ENCODE measurements at regions of chr9 and their contacts with region 1.

Region 1: DNA sequence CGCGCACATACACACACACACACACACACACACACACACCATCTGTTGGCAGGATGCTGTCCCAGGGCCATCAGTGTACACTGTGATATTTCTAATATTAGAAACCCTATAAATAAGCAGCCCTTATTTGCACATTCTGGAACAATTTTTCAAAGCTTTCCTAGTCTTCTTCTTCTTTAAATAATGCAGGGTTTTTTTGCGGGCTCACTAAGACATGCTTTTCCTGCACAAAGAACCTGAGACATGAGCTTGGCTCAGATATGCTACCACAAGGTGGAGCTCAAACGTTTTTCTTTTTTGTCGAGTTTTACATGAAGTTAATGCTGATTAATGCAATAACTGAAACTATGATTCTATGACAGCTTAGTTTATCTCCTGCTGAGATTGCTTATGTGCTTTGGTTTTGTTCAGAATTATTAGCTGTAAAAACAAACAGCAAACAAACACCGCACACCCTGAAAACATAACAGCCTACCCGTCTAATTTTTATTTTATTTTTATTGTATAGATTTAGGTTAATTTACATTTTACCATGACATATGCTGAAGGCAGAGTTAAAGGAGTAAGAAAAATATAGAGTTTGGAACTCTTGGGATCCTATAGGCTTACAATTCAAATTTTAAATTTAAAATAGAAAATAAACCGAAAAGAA is 95.8 kb downstream of the ALDH1A1 start:
- DNase-seq: no peak
- H3K4me3 ChIP-seq: no peak overlapping the region
- H3K27ac ChIP-seq: peak overlapping the region in 2 of 4 donors; percentile 3 to 37
- H3K4me1 ChIP-seq: peaks cover 12 to 22% (median 14%) of the 10 kb centered on the region in 4 donors
- H3K27me3 ChIP-seq: no peaks in the 10 kb centered on the region
- CTCF ChIP-seq: peak; percentile 57 to 67 (median 60)
- EP300 ChIP-seq: no peak
- POLR2A ChIP-seq: no peak

Region 2: GRCh38 chr9:72322259-72322658 is 534.8 kb before region 1 on chr9:
- in situ Hi-C with region 1: no loop called
- intact Hi-C with region 1: no loop called
- DNase-seq: no peak
- H3K4me3 ChIP-seq: no peak overlapping the region
- H3K27ac ChIP-seq: no peak overlapping the region
- H3K4me1 ChIP-seq: peaks cover 0 to 3% (median 0%) of the 10 kb centered on the region in 4 donors
- H3K27me3 ChIP-seq: no peaks in the 10 kb centered on the region
- CTCF ChIP-seq: no peak
- EP300 ChIP-seq: no peak
- POLR2A ChIP-seq: no peak

Region 3: GRCh38 chr9:72817413-72817812 is 39.7 kb before region 1 on chr9:
- in situ Hi-C with region 1: no loop called
- intact Hi-C with region 1: no loop called
- DNase-seq: no peak
- H3K4me3 ChIP-seq: no peak overlapping the region
- H3K27ac ChIP-seq: no peak overlapping the region
- H3K4me1 ChIP-seq: peaks cover 0 to 17% (median 2%) of the 10 kb centered on the region in 4 donors
- H3K27me3 ChIP-seq: no peaks in the 10 kb centered on the region
- CTCF ChIP-seq: no peak
- EP300 ChIP-seq: no peak
- POLR2A ChIP-seq: no peak

Region 4: DNA sequence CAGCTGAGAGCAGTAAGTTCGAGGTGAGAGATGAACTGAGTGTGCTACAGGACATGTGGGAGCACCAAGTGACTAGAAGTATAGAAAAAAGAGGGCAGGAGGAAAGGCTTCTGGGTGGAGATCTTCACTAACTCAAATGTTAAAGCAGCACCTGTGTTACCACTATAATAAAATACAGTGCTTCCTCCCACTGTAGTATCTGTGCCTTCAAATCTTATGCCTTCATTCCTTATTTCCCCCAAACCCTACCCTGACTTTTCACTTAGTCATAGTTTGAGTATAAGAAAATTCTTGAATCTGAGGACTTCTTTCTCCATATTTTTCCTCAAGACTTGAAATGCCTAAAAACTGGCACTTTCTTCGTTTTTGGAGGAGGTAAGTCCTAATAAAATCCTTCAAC is 33.9 kb after region 1 on chr9:
- in situ Hi-C with region 1: no loop called
- intact Hi-C with region 1: loop called (anchors 1 kb)
- DNase-seq: no peak
- H3K4me3 ChIP-seq: no peak overlapping the region
- H3K27ac ChIP-seq: no peak overlapping the region
- H3K4me1 ChIP-seq: no peaks in the 10 kb centered on the region
- H3K27me3 ChIP-seq: no peaks in the 10 kb centered on the region
- CTCF ChIP-seq: no peak
- EP300 ChIP-seq: no peak
- POLR2A ChIP-seq: no peak

Region 5: GRCh38 chr9:72907421-72907820 is 50.3 kb after region 1 on chr9:
- in situ Hi-C with region 1: no loop called
- intact Hi-C with region 1: no loop called
- DNase-seq: no peak
- H3K4me3 ChIP-seq: no peak overlapping the region
- H3K27ac ChIP-seq: no peak overlapping the region
- H3K4me1 ChIP-seq: peaks cover 0 to 7% (median 3%) of the 10 kb centered on the region in 4 donors
- H3K27me3 ChIP-seq: no peaks in the 10 kb centered on the region
- CTCF ChIP-seq: no peak
- EP300 ChIP-seq: no peak
- POLR2A ChIP-seq: no peak

Region 6: GRCh38 chr9:73023025-73023541 is 166.0 kb after region 1 on chr9:
- in situ Hi-C with region 1: loop called (anchors 10 to 25 kb)
- intact Hi-C with region 1: loop called (anchors 5 kb)
- DNase-seq: peak; percentile 67
- H3K4me3 ChIP-seq: no peak overlapping the region
- H3K27ac ChIP-seq: peak overlapping the region in 3 of 4 donors; percentile 20 to 38 (median 30)
- H3K4me1 ChIP-seq: peaks cover 0 to 7% (median 6%) of the 10 kb centered on the region in 4 donors
- H3K27me3 ChIP-seq: no peaks in the 10 kb centered on the region
- CTCF ChIP-seq: peak; percentile 79 to 89 (median 86)
- EP300 ChIP-seq: no peak
- POLR2A ChIP-seq: no peak

Region 7: DNA sequence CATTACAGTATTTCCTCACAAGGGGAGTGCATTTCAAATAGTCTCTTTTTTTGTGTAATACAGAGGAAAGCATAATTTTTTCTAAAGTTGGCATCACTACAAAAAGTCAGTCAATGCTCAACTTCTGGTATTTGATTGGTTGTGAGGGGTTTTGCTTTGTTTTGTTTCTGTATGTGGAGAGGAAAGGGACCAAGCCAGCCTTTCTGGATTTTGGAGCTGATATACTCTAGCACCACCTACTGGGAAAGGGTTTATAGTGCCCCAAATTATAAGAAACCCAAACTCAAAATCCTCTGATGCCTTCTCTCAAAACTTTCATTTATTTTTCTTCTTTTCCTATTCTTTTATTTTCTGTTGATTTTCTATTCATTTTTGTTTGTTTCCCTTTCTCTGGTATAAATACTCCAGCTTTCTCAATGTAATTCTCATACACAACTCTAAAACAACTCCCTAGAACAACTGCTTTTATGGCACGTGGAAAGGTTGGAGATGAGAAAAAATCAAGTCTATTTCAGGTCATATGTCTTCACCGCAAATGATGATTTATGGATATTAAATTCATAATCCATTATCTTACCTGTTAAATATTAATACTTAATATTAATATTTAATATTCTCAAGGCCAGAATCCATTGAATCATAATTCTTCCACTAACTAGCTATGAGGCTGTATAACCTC is 225.0 kb after region 1 on chr9:
- in situ Hi-C with region 1: loop called (anchors 10 to 25 kb)
- intact Hi-C with region 1: loop called (anchors 5 kb)
- DNase-seq: no peak
- H3K4me3 ChIP-seq: no peak overlapping the region
- H3K27ac ChIP-seq: peak overlapping the region in 2 of 4 donors; percentile 10 to 59
- H3K4me1 ChIP-seq: peaks cover 13 to 48% (median 27%) of the 10 kb centered on the region in 4 donors
- H3K27me3 ChIP-seq: no peaks in the 10 kb centered on the region
- CTCF ChIP-seq: peak; percentile 70 to 77 (median 75)
- EP300 ChIP-seq: no peak
- POLR2A ChIP-seq: no peak

Region 8: GRCh38 chr9:73183917-73184861 is 327.1 kb after region 1 on chr9:
- in situ Hi-C with region 1: loop called in 3 of 4 experiments (anchors 25 kb)
- intact Hi-C with region 1: no loop called
- DNase-seq: no peak
- H3K4me3 ChIP-seq: no peak overlapping the region
- H3K27ac ChIP-seq: no peak overlapping the region
- H3K4me1 ChIP-seq: no peaks in the 10 kb centered on the region
- H3K27me3 ChIP-seq: no peaks in the 10 kb centered on the region
- CTCF ChIP-seq: peak; percentile 52 to 73 (median 60)
- EP300 ChIP-seq: no peak
- POLR2A ChIP-seq: no peak

Region 9: GRCh38 chr9:73426269-73426668 is 569.2 kb after region 1 on chr9:
- in situ Hi-C with region 1: no loop called
- intact Hi-C with region 1: no loop called
- DNase-seq: no peak
- H3K4me3 ChIP-seq: no peak overlapping the region
- H3K27ac ChIP-seq: no peak overlapping the region
- H3K4me1 ChIP-seq: no peaks in the 10 kb centered on the region
- H3K27me3 ChIP-seq: no peaks in the 10 kb centered on the region
- CTCF ChIP-seq: no peak
- EP300 ChIP-seq: no peak
- POLR2A ChIP-seq: no peak